Calu3 (cell line): ENCODE measurements at regions of chr12 and their contacts with region 1.

Region 1: GRCh38 chr12:11486623-11487444 is 91.5 kb upstream of the PRB2 start:
- DNase-seq: peak; percentile 78
- H3K4me3 Mint-ChIP-seq: no peak overlapping the region
- H3K27ac Mint-ChIP-seq: no peak overlapping the region
- H3K4me1 Mint-ChIP-seq: peaks cover 21% of the 10 kb centered on the region
- H3K27me3 Mint-ChIP-seq: peaks cover 56% of the 10 kb centered on the region
- CTCF ChIP-seq: peak; percentile 97

Region 2: GRCh38 chr12:10771132-10771733 is 715.6 kb before region 1 on chr12:
- CTCF ChIA-PET with region 1: interaction called, 13 read pairs
- intact Hi-C with region 1: loop called (anchors 1 kb)
- DNase-seq: no peak
- H3K4me3 Mint-ChIP-seq: no peak overlapping the region
- H3K27ac Mint-ChIP-seq: no peak overlapping the region
- H3K4me1 Mint-ChIP-seq: no peaks in the 10 kb centered on the region
- H3K27me3 Mint-ChIP-seq: peaks cover 76% of the 10 kb centered on the region
- CTCF ChIP-seq: peak; percentile 27

Region 3: GRCh38 chr12:11228296-11228879 is 258.4 kb before region 1 on chr12:
- CTCF ChIA-PET with region 1: interaction called, 14 read pairs
- intact Hi-C with region 1: loop called (anchors 1 kb)
- DNase-seq: peak; percentile 63
- H3K4me3 Mint-ChIP-seq: no peak overlapping the region
- H3K27ac Mint-ChIP-seq: no peak overlapping the region
- H3K4me1 Mint-ChIP-seq: no peaks in the 10 kb centered on the region
- H3K27me3 Mint-ChIP-seq: peaks cover 69% of the 10 kb centered on the region
- CTCF ChIP-seq: peak; percentile 67